Activated naive CD4-positive, alpha-beta T cell treated with anti-CD3 and anti-CD28 coated beads for 36 hours (primary cell): ENCODE measurements at regions of chr2 and their contacts with region 1.

Region 1: GRCh38 chr2:136378712-136379595 is 261.0 kb upstream of the CXCR4 start:
- DNase-seq: peak; percentile 90
- H3K4me3 Mint-ChIP-seq: no peak overlapping the region
- H3K27ac Mint-ChIP-seq: no peak overlapping the region
- H3K4me1 Mint-ChIP-seq: peaks cover 79% of the 10 kb centered on the region
- H3K27me3 Mint-ChIP-seq: no peaks in the 10 kb centered on the region

Region 2: DNA sequence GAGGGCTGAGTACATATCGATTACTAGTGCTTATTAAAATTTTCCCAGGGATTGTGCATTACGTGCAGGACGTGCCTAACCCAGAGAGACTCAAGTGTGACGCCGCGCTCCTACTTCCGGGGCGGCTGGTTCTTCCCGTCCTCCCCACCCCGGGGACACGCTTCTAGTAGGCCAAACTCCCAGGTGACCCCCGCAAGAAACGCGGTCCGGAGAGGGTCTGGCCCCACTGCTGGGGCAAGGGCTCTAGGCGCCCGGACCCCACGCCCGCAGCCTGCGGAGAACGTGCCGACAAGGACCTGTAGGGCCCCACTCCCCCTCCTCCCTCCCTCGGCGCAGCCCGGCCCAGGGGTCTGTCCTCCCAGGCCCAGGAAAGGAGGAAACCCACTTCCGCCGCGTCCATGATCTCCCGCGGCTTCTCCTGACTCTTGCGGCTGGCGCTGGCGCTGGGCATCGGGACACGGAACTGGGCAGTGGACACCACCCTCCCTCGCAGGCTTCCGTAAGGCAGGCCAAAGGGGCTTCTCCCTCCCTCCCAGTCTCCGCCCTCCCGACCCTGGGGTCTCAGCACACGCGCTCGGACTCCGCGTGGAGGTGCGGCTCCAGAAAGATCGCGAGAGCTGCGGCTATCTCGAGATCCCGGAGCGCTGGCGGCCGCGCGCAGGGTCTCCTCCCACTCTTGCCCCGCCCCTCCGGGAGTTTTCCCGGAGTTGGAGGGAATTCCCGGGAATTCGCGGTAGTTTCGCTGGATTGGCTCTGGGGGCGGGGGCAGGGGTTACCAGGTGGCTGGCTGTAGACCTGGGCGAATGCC is 393.7 kb before region 1 on chr2 and contains the start of gene DARS1:
- CTCF ChIA-PET with region 1: interaction called, 8 read pairs
- intact Hi-C with region 1: loop called (anchors 1 kb)
- DNase-seq: peak; percentile 90
- H3K4me3 Mint-ChIP-seq: peak within 1 kb of the TSS; percentile 95
- H3K27ac Mint-ChIP-seq: peak within 1 kb of the TSS; percentile 97
- H3K4me1 Mint-ChIP-seq: peaks cover 39% of the 10 kb centered on the region
- H3K27me3 Mint-ChIP-seq: no peaks in the 10 kb centered on the region
- total RNA-seq, gene DARS1: 161 to 177 TPM

Region 3: GRCh38 chr2:136207030-136207623 is 171.8 kb before region 1 on chr2:
- CTCF ChIA-PET with region 1: interaction called, 5 read pairs
- intact Hi-C with region 1: loop called (anchors 1 kb)
- DNase-seq: peak; percentile 61
- H3K4me3 Mint-ChIP-seq: no peak overlapping the region
- H3K27ac Mint-ChIP-seq: peak overlapping the region; percentile 86
- H3K4me1 Mint-ChIP-seq: peaks cover 37% of the 10 kb centered on the region
- H3K27me3 Mint-ChIP-seq: no peaks in the 10 kb centered on the region

Region 4: DNA sequence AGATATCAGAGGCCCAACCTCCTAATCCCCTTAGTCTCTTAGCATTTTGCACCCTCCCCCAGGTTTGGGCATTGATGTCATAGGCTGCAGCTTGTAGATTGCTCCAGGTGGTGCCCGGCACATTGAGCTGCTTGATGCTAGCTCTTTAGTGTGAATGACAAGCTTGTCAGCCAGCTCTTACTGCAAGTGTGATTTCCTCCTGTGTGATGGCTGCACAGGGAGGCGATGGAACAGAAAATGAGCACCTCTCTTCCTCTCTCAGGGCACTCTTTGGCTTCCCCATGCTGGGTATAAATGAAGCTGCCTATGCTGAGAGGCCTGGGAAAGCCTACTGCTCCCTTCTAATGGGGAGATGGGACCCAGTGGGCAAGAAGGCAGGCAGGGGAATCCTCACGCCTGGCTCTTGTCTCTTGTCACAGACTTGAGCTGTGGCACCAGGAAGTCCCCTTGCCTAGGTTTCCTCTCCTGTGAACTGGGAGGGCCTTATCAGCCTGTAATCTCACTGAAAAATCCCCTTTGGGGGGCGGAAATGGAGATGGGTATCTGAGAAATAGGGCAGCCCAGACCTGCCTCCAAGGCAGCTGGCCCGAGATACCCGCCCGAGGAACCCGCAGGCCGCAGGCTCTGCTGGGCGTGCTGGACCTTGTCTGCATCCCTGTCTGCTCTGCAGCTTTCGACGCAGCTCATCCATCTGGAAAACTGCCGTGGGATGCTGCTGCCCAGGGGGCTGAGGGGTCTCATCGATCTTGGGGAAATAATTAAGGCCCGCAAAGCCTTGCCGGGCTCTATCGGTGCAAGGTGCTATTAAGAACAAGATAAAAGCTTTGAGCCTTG is 97.5 kb before region 1 on chr2:
- CTCF ChIA-PET with region 1: interaction called, 7 read pairs
- intact Hi-C with region 1: loop called (anchors 1 kb)
- DNase-seq: peak; percentile 73
- H3K4me3 Mint-ChIP-seq: no peak overlapping the region
- H3K27ac Mint-ChIP-seq: peak overlapping the region; percentile 74
- H3K4me1 Mint-ChIP-seq: peaks cover 43% of the 10 kb centered on the region
- H3K27me3 Mint-ChIP-seq: no peaks in the 10 kb centered on the region

Region 5: DNA sequence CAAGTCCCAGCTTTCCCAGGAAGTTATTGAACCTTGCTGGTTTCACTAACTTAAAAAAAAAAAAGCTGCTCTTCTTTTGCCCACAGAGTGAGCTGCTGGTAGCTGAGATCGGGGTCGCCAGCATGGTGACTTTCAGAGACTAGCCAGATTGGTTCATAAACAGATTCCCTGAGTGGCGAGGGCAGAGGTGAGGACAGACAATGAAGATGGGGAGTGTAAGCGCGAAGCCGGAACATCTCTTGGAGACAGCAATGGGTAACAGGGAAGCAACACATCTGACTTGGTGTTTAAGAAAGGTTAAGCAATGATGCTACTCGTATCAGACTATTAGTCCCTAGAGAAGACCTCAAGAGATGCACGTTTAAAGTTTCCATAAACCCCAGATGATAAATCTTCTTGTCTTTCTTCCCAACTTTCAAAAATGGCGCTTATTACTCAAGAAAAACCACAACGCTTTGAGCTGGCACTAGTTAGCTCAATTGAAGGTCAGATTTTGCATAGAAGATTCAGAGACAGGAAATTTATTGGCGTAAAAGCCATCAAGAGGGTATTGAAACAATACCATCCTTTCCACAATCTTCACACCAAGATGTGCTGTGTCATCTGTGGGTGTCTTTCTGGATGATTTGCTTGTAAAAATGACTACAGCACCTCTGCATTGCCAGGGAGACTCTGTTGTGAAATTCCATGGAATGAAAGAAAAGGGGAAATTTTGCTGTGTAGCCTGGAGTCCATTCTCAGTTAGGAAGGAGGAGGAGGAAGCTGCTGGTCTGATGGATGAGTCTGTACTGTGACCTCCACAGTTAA is 68.0 kb before region 1 on chr2:
- CTCF ChIA-PET with region 1: interaction called, 5 read pairs
- intact Hi-C with region 1: loop called (anchors 1 kb)
- DNase-seq: peak; percentile 60
- H3K4me3 Mint-ChIP-seq: no peak overlapping the region
- H3K27ac Mint-ChIP-seq: peak overlapping the region; percentile 82
- H3K4me1 Mint-ChIP-seq: peaks cover 18% of the 10 kb centered on the region
- H3K27me3 Mint-ChIP-seq: no peaks in the 10 kb centered on the region

Region 6: GRCh38 chr2:136362676-136363390 is 16.1 kb before region 1 on chr2:
- CTCF ChIA-PET with region 1: interaction called, 9 read pairs
- intact Hi-C with region 1: loop called (anchors 1 kb)
- DNase-seq: peak; percentile 68
- H3K4me3 Mint-ChIP-seq: no peak overlapping the region
- H3K27ac Mint-ChIP-seq: peak overlapping the region; percentile 42
- H3K4me1 Mint-ChIP-seq: peaks cover 51% of the 10 kb centered on the region
- H3K27me3 Mint-ChIP-seq: peaks cover 4% of the 10 kb centered on the region